ENCODE measurements at regions of chrX and their contacts with region 1.

Region 1: GRCh38 chrX:152641996-152642395 is 4.3 kb downstream of the GABRQ start:
- DNase-seq: no peak
- H3K4me3 Mint-ChIP-seq: no peak overlapping the region
- H3K27ac Mint-ChIP-seq: no peak overlapping the region
- H3K4me1 Mint-ChIP-seq: no peaks in the 10 kb centered on the region
- H3K27me3 Mint-ChIP-seq: peaks cover 11% of the 10 kb centered on the region

Region 2: GRCh38 chrX:152817078-152817764 is 175.2 kb after region 1 on chrX:
- CTCF ChIA-PET with region 1: no interaction called
- POLR2A ChIA-PET with region 1: no interaction called
- intact Hi-C with region 1: loop called (anchors 10 kb)
- DNase-seq: peak; percentile 35
- H3K4me3 Mint-ChIP-seq: no peak overlapping the region
- H3K27ac Mint-ChIP-seq: no peak overlapping the region
- H3K4me1 Mint-ChIP-seq: peaks cover 5% of the 10 kb centered on the region
- H3K27me3 Mint-ChIP-seq: peaks cover 4% of the 10 kb centered on the region